HEK293 (cell line): ENCODE measurements at regions of chr17 and their contacts with region 1.

Region 1: GRCh38 chr17:81419328-81419885 is 24.1 kb downstream of the BAHCC1 start:
- H3K4me3 ChIP-seq: peak overlapping the region; percentile 25
- H3K27ac ChIP-seq: peak overlapping the region; percentile 81
- H3K4me1 ChIP-seq: peaks cover 16% of the 10 kb centered on the region
- CTCF ChIP-seq: no peak

Region 2: DNA sequence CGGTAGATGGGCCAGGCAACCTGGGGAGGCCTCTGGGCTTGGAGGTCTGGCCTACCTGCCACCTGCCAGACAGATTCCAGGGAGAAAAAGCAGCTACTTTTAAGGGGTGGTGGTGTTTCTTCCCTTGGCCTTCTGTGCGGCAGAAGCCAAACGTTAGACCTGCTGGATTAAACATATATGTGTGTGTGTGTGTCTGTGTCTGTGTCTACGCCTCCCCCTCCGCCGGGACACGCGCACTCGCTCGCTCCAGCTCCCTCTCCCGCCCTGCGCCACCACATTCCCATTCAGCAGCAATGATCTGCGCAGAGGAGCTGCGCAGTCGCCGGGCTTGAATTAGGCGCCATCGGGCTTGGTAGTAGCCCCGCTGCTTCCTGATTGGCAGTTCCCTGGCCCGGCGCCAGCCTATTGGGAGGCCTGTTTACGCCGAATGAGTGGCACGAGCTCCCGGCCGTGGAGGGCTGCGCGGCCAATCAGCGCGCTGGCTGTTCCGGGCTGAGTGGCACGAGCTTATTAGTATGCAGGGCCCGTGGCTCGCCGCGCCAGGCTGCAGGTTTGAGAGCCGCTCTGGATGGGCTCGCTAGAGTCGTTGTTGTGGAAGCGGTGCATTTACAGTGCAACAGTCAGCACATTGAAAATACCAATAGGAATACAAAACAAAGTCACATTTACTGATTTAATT is 24.3 kb before region 1 on chr17 and contains the start of gene BAHCC1:
- CTCF ChIA-PET with region 1: no interaction called
- POLR2A ChIA-PET with region 1: interaction called, 35 read pairs
- H3K4me3 ChIP-seq: peak within 1 kb of the TSS; percentile 92
- H3K27ac ChIP-seq: peak within 1 kb of the TSS; percentile 100
- H3K4me1 ChIP-seq: peaks cover 23% of the 10 kb centered on the region
- CTCF ChIP-seq: peak; percentile 32; the same call in 1 of the 2 replicates

Region 3: GRCh38 chr17:81401723-81402529 is 17.5 kb before region 1 on chr17:
- CTCF ChIA-PET with region 1: interaction called, 5 read pairs
- POLR2A ChIA-PET with region 1: interaction called, 35 read pairs
- H3K4me3 ChIP-seq: no peak overlapping the region
- H3K27ac ChIP-seq: no peak overlapping the region; the same call in 1 of the 2 replicates
- H3K4me1 ChIP-seq: peaks cover 33% of the 10 kb centered on the region
- CTCF ChIP-seq: no peak

Region 4: GRCh38 chr17:81601525-81602120 is 182.2 kb after region 1 on chr17:
- CTCF ChIA-PET with region 1: no interaction called
- POLR2A ChIA-PET with region 1: no interaction called
- H3K4me3 ChIP-seq: no peak overlapping the region
- H3K27ac ChIP-seq: no peak overlapping the region
- H3K4me1 ChIP-seq: no peaks in the 10 kb centered on the region
- CTCF ChIP-seq: peak; percentile 43; the same call in 1 of the 2 replicates